ENCODE measurements at regions of chr2 and their contacts with region 1.

Region 1: GRCh38 chr2:9630749-9631483 is at the start of gene YWHAQ:
- DNase-seq: peak; percentile 99
- H3K4me3 ChIP-seq: peak within 1 kb of the TSS; percentile 89
- H3K27ac ChIP-seq: peak within 1 kb of the TSS; percentile 75
- H3K4me1 ChIP-seq: peaks cover 32% of the 10 kb centered on the region
- CTCF ChIP-seq: no peak
- total RNA-seq, gene YWHAQ: 152 and 181 TPM in 2 replicates

Region 2: GRCh38 chr2:9555297-9556141 is 75.4 kb before region 1 on chr2 and contains the start of gene ADAM17:
- CTCF ChIA-PET with region 1: interaction called, 4 read pairs
- POLR2A ChIA-PET with region 1: interaction called, 6 read pairs
- intact Hi-C with region 1: loop called (anchors 2 kb)
- DNase-seq: peak; percentile 94
- H3K4me3 ChIP-seq: peak within 1 kb of the TSS; percentile 89
- H3K27ac ChIP-seq: peak within 1 kb of the TSS; percentile 97
- H3K4me1 ChIP-seq: peaks cover 30% of the 10 kb centered on the region
- CTCF ChIP-seq: peak; percentile 70
- total RNA-seq, gene ADAM17: 46.9 and 50.5 TPM in 2 replicates

Measured in OCI-LY7 (cell line).